Heart right ventricle (tissue), 16 donors: ENCODE measurements at regions of chr10 and their contacts with region 1.

Region 1: DNA sequence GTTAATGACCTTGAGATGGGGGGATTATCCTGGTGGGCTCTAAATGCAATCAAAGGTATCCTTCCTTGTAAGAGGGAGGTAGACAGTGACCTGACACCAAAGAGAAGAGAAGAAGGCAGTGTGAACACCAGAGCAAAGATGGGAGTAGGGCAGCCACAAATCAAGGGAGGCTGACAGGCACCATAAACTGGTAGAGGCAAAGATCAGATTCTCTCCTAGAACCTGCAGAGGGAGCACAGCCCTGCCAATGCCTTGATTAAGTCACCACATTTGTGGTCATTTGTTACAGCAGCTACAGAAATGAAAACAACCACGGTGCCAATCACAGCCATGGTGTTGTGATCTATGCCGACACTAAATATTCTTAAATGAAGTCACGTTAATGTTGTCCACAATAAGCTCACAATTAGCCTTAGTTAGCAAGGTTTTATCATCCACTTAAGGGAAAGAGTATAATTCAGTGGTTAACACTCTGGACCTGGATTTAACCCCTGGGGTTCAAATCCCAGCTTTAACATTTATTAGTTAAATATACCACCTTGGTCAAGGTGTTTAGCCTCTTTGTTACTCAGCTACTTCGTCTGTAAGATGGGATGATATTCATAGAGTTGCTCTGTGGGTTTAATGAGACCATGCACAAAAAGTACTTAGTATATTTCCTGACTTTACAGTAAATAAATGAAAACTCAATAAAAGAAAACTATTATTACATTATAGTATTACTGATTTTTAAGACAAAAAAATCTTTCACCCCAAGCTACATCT is 70.8 kb downstream of the SGMS1 start:
- DNase-seq: no peak
- ATAC-seq: no peak
- H3K4me3 ChIP-seq: no peak overlapping the region
- H3K27ac ChIP-seq: peak overlapping the region in 6 of 10 donors; percentile 11 to 74 (median 44)
- H3K4me1 ChIP-seq: peaks cover 11 to 86% (median 71%) of the 10 kb centered on the region in 9 donors
- H3K27me3 ChIP-seq: no peaks in the 10 kb centered on the region
- CTCF ChIP-seq: peak in 5 of 9 donors; percentile 9 to 41 (median 30)

Region 2: DNA sequence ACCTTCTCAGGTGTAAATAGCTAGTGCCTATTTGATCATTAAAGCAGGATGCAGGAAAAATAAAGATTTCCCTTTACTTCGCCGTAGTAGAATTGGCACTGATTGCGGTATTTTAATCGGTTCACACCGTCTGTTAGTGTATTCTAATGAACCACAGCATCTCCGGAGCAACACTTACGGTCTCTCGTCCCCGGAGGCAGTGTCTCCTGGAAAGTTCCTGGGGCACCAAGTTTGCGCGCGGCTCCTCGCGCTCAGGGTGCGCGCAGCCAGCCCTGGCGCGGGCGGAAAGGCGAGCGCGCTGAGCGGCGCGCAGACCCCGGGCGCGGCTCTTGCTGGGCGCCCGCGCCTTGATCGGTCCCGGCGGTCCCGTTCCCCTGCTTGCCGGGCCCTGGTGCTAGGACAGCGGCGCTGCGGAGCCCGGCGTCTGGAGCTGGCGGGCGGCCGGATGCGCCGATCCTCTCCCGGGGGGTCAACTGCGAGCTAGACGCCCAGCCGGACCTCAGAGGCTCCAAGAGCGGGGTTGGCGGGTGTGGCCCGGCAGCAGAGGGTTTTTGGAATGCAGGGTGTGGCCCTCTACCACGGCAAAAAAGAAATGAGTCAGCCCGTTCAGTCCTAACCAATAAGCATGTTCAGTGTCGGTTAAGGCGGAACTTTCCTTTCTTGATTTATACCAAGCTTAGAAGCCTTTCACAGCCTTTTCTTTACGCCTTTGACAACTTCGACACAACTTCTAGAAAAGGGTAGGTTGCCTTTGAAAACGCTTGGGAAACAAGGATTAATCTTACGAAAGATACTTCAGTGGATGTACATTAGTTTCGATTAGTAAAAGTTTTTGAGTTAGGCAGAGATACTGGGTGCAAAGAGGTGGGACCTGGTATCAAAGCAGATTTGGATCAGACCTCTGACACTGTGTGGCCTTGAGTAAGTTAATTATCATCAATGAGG is 134.8 kb before region 1 on chr10:
- intact Hi-C with region 1: loop called in 3 of 10 experiments (anchors 5 to 10 kb)
- DNase-seq: peak; percentile 70 to 79
- ATAC-seq: peak; percentile 86 to 97 (median 92)
- H3K4me3 ChIP-seq: peak overlapping the region; percentile 44 to 80 (median 68)
- H3K27ac ChIP-seq: peak overlapping the region; percentile 34 to 91 (median 82)
- H3K4me1 ChIP-seq: peaks cover 0 to 82% (median 35%) of the 10 kb centered on the region in 9 donors
- H3K27me3 ChIP-seq: no peaks in the 10 kb centered on the region
- CTCF ChIP-seq: peak in 2 of 9 donors; percentile 21 to 29

Region 3: DNA sequence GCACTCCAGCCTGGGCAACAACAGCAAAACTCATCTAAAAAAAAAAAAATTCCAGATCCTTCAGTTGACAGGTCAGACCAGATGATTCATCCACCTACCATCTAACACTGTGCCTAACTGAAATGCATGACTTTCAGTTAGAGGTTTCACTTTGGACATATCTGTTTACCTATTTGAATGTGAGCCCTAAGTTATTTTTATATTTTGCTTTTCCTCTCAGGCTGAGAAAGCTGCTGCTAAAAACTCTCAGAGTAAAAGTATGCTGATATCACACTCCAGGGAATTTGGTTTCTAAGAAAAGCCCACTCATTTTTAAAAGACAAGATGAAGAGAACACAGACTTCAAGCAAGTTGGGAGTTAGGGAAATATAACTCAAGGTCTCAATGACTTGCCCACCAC is 55.2 kb before region 1 on chr10:
- intact Hi-C with region 1: loop called in 1 of 10 experiments (anchors 5 kb)
- DNase-seq: no peak
- ATAC-seq: peak; percentile 38 to 86 (median 73)
- H3K4me3 ChIP-seq: peak overlapping the region in 5 of 10 donors; percentile 7 to 27 (median 14)
- H3K27ac ChIP-seq: peak overlapping the region in 8 of 10 donors; percentile 17 to 84 (median 60)
- H3K4me1 ChIP-seq: peaks cover 0 to 44% (median 28%) of the 10 kb centered on the region in 9 donors
- H3K27me3 ChIP-seq: no peaks in the 10 kb centered on the region
- CTCF ChIP-seq: no peak

Region 4: DNA sequence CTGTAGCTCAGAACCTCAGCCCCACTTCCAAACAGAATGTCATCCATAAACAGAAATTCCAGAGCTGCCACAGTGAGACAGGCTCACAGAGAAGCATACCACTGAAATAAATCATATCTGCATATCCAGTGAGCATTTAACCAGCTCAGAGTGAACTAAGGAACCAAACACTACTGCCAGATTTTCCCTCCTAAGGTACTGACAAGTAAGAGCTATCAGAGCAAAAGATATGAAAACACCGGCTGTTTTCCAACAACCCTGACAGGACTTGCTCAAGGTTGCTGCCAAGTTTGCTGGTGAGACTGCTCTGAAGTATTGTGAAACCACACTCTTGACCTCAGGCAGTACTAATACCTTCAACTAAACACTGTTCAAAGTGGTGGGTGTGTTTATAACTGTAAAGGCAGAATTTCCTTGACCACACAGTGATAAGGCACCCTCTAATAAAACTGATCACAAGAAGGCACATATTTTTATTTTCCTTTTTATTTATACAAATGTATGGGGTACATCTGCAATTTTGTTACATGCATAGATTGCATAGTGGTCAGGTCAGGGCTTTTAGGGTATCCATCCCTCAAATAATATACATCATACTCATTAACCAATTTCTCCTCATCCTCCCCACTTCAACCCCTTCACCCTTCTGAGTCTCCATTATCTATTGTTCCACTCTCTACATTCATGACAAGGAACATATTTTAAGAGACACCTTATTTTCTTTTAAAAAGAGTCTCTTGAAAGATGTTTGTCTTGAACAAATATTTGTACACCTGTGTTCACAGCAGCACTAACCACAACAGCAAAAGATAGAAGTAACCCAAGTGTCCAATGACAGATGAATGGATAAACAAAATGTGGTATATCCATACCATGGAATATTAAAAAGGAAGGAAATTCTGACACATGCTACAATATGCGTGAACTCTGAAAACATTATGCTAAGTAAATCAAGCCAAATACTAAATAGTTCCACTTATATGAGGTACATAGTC is 52.6 kb after region 1 on chr10:
- intact Hi-C with region 1: loop called in 1 of 10 experiments (anchors 10 kb)
- DNase-seq: peak in 1 of 2 donors; percentile 43
- ATAC-seq: peak; percentile 70 to 96 (median 78)
- H3K4me3 ChIP-seq: peak overlapping the region in 5 of 10 donors; percentile 2 to 40 (median 11)
- H3K27ac ChIP-seq: peak overlapping the region in 9 of 10 donors; percentile 42 to 81 (median 59)
- H3K4me1 ChIP-seq: peaks cover 0 to 84% (median 71%) of the 10 kb centered on the region in 9 donors
- H3K27me3 ChIP-seq: no peaks in the 10 kb centered on the region
- CTCF ChIP-seq: no peak

Region 5: DNA sequence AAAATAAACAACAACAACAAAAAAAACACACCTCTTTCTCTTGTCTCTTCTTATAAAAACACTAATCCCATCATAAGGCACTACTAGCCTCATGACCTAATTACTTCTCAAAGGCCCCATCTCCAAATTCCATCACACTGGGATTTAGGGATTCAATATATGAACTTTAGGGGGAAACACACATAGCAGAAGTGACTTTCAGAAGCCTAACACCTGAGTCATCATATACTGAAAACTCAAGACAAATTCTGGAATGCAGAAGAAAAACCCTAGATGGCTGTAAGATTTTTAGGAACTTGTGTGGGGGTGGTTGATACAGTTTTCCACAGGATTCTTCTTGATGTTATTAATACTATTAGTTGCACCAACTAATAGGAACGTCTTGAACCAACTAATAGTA is 1180.1 kb after region 1 on chr10:
- intact Hi-C with region 1: no loop called
- DNase-seq: no peak
- ATAC-seq: no peak
- H3K4me3 ChIP-seq: no peak overlapping the region
- H3K27ac ChIP-seq: no peak overlapping the region
- H3K4me1 ChIP-seq: peaks cover 0 to 6% (median 0%) of the 10 kb centered on the region in 9 donors
- H3K27me3 ChIP-seq: no peaks in the 10 kb centered on the region
- CTCF ChIP-seq: no peak